CD8-positive, alpha-beta T cell (primary cell): ENCODE measurements at regions of chr2 and their contacts with region 1.

Region 1: GRCh38 chr2:225002039-225002655 is 40.1 kb downstream of the DOCK10 start:
- DNase-seq: peak; percentile 28 to 89 (median 72)
- ATAC-seq: peak; percentile 84
- H3K4me3 ChIP-seq: peak overlapping the region in 1 of 2 experiments; percentile 17
- H3K4me3 Mint-ChIP-seq: peak overlapping the region; percentile 29
- H3K27ac ChIP-seq: peak overlapping the region; percentile 18 to 52
- H3K27ac Mint-ChIP-seq: peak overlapping the region; percentile 86
- H3K4me1 ChIP-seq: peaks cover 38% of the 10 kb centered on the region
- H3K4me1 Mint-ChIP-seq: peaks cover 87% of the 10 kb centered on the region
- H3K27me3 ChIP-seq: no peaks in the 10 kb centered on the region
- H3K27me3 Mint-ChIP-seq: no peaks in the 10 kb centered on the region
- CTCF ChIP-seq: peak; percentile 82

Region 2: GRCh38 chr2:224895377-224895776 is 106.8 kb before region 1 on chr2:
- CTCF ChIA-PET with region 1: interaction called, 11 read pairs
- POLR2A ChIA-PET with region 1: no interaction called
- intact Hi-C with region 1: no loop called
- DNase-seq: peak in 1 of 9 experiments; percentile 13
- ATAC-seq: no peak
- H3K4me3 ChIP-seq: no peak overlapping the region
- H3K4me3 Mint-ChIP-seq: no peak overlapping the region
- H3K27ac ChIP-seq: peak overlapping the region in 1 of 2 experiments; percentile 45
- H3K27ac Mint-ChIP-seq: peak overlapping the region; percentile 92
- H3K4me1 ChIP-seq: peaks cover 11% of the 10 kb centered on the region
- H3K4me1 Mint-ChIP-seq: peaks cover 50% of the 10 kb centered on the region
- H3K27me3 ChIP-seq: no peaks in the 10 kb centered on the region
- H3K27me3 Mint-ChIP-seq: no peaks in the 10 kb centered on the region
- CTCF ChIP-seq: no peak

Region 3: GRCh38 chr2:224927646-224928173 is 74.4 kb before region 1 on chr2:
- CTCF ChIA-PET with region 1: interaction called, 47 read pairs
- POLR2A ChIA-PET with region 1: interaction called, 3 read pairs
- intact Hi-C with region 1: loop called (anchors 1 kb)
- DNase-seq: peak; percentile 39 to 93 (median 65)
- ATAC-seq: peak; percentile 81
- H3K4me3 ChIP-seq: no peak overlapping the region
- H3K4me3 Mint-ChIP-seq: peak overlapping the region; percentile 62
- H3K27ac ChIP-seq: peak overlapping the region; percentile 77 to 84
- H3K27ac Mint-ChIP-seq: peak overlapping the region; percentile 99
- H3K4me1 ChIP-seq: peaks cover 94% of the 10 kb centered on the region
- H3K4me1 Mint-ChIP-seq: peaks cover 97% of the 10 kb centered on the region
- H3K27me3 ChIP-seq: no peaks in the 10 kb centered on the region
- H3K27me3 Mint-ChIP-seq: no peaks in the 10 kb centered on the region
- CTCF ChIP-seq: no peak

Region 4: GRCh38 chr2:224952936-224953657 is 49.0 kb before region 1 on chr2:
- CTCF ChIA-PET with region 1: interaction called, 63 read pairs
- POLR2A ChIA-PET with region 1: interaction called, 3 read pairs
- intact Hi-C with region 1: no loop called
- DNase-seq: peak in 8 of 9 experiments; percentile 31 to 76 (median 53)
- ATAC-seq: peak; percentile 95
- H3K4me3 ChIP-seq: no peak overlapping the region
- H3K4me3 Mint-ChIP-seq: peak overlapping the region; percentile 36
- H3K27ac ChIP-seq: peak overlapping the region in 1 of 2 experiments; percentile 44
- H3K27ac Mint-ChIP-seq: peak overlapping the region; percentile 92
- H3K4me1 ChIP-seq: peaks cover 75% of the 10 kb centered on the region
- H3K4me1 Mint-ChIP-seq: peaks cover 84% of the 10 kb centered on the region
- H3K27me3 ChIP-seq: no peaks in the 10 kb centered on the region
- H3K27me3 Mint-ChIP-seq: no peaks in the 10 kb centered on the region
- CTCF ChIP-seq: no peak

Region 5: GRCh38 chr2:225052703-225053102 is 50.6 kb after region 1 on chr2:
- CTCF ChIA-PET with region 1: interaction called, 11 read pairs
- POLR2A ChIA-PET with region 1: no interaction called
- intact Hi-C with region 1: no loop called
- DNase-seq: peak in 8 of 9 experiments; percentile 15 to 78 (median 40)
- ATAC-seq: peak; percentile 79
- H3K4me3 ChIP-seq: no peak overlapping the region
- H3K4me3 Mint-ChIP-seq: peak overlapping the region; percentile 64
- H3K27ac ChIP-seq: peak overlapping the region in 1 of 2 experiments; percentile 32
- H3K27ac Mint-ChIP-seq: peak overlapping the region; percentile 87
- H3K4me1 ChIP-seq: peaks cover 54% of the 10 kb centered on the region
- H3K4me1 Mint-ChIP-seq: peaks cover 67% of the 10 kb centered on the region
- H3K27me3 ChIP-seq: no peaks in the 10 kb centered on the region
- H3K27me3 Mint-ChIP-seq: no peaks in the 10 kb centered on the region
- CTCF ChIP-seq: no peak

Region 6: DNA sequence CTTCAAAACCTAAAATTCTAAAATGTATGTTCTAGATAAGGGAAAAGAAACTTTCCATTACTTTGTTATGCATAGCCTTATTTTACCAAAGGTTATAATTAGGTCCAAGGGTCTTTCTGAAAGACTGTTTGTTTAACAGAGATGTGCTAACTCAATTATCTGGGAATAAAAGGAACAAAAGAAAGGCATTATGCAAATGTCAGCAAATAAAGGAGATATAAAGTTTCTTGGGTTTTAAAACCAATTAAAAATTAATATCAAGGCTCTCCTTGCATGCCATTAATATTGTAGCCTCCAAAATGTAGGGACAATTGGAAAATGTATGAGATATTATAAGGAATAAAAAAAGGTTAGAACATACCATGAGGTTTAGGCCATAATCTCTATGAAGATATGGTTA is 127.9 kb after region 1 on chr2:
- CTCF ChIA-PET with region 1: no interaction called
- POLR2A ChIA-PET with region 1: no interaction called
- intact Hi-C with region 1: no loop called
- DNase-seq: no peak
- ATAC-seq: no peak
- H3K4me3 ChIP-seq: no peak overlapping the region
- H3K4me3 Mint-ChIP-seq: no peak overlapping the region
- H3K27ac ChIP-seq: no peak overlapping the region
- H3K27ac Mint-ChIP-seq: no peak overlapping the region
- H3K4me1 ChIP-seq: no peaks in the 10 kb centered on the region
- H3K4me1 Mint-ChIP-seq: no peaks in the 10 kb centered on the region
- H3K27me3 ChIP-seq: no peaks in the 10 kb centered on the region
- H3K27me3 Mint-ChIP-seq: no peaks in the 10 kb centered on the region
- CTCF ChIP-seq: no peak

Region 7: GRCh38 chr2:226984750-226985582 is 1982.8 kb after region 1 on chr2:
- CTCF ChIA-PET with region 1: no interaction called
- POLR2A ChIA-PET with region 1: no interaction called
- intact Hi-C with region 1: loop called in 1 of 2 experiments (anchors 10 kb)
- DNase-seq: peak in 3 of 9 experiments; percentile 14 to 53 (median 33)
- ATAC-seq: peak; percentile 77
- H3K4me3 ChIP-seq: no peak overlapping the region
- H3K4me3 Mint-ChIP-seq: no peak overlapping the region
- H3K27ac ChIP-seq: no peak overlapping the region
- H3K27ac Mint-ChIP-seq: peak overlapping the region; percentile 79
- H3K4me1 ChIP-seq: peaks cover 14% of the 10 kb centered on the region
- H3K4me1 Mint-ChIP-seq: peaks cover 21% of the 10 kb centered on the region
- H3K27me3 ChIP-seq: no peaks in the 10 kb centered on the region
- H3K27me3 Mint-ChIP-seq: no peaks in the 10 kb centered on the region
- CTCF ChIP-seq: peak; percentile 46